Thyroid gland (tissue), 4 donors: ENCODE measurements at regions of chr17 and their contacts with region 1.

Region 1: DNA sequence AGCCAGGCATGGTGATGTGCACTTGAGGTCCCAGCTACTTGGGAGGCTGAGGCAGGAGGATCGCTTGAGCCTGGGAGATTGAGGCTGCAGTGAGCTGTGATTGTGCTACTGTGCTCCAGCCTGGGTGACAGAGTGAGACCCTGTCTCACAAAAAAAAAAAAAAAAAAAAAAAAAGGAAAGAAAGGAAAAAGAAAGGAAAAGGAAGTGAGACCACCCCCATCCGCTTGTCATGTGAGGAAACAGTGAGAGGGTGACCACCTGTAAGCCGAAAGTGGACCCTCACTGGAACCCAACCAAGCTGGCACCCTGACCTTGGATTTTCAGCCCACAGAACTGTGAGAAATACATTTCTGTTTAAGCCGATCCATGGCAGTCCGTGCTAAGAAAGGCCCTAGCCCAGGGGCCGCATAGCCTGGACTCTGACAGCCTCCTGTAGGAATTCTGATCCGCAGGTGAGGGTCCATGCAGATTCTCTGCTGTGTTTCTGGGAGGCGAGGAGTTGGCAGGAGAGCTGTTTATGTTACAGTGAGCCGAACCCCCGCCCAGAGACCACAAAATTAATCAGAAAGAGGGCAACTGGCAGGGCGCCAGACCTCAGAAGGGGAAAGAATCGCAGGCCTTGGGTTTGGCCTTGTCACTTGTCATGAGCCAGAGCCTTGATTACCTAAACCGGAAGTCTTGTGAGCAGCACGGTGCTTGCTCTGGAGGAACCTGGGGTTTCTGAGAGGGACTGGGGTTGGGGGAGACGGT is 945 bp downstream of the SGSH start:
- DNase-seq: peak; percentile 64 to 69
- H3K4me3 ChIP-seq: peak overlapping the region; percentile 93 to 100 (median 93)
- H3K27ac ChIP-seq: peak overlapping the region; percentile 82 to 95 (median 89)
- H3K4me1 ChIP-seq: peaks cover 18 to 21% of the 10 kb centered on the region in 2 donors
- H3K27me3 ChIP-seq: no peaks in the 10 kb centered on the region
- CTCF ChIP-seq: no peak
- POLR2A ChIP-seq: no peak

Region 2: GRCh38 chr17:80147035-80147836 is 72.0 kb before region 1 on chr17 and contains the start of gene EIF4A3:
- intact Hi-C with region 1: loop called (anchors 5 kb)
- DNase-seq: peak; percentile 98 to 99
- H3K4me3 ChIP-seq: peak within 1 kb of the TSS; percentile 79 to 99 (median 91)
- H3K27ac ChIP-seq: peak within 1 kb of the TSS; percentile 57 to 94 (median 94)
- H3K4me1 ChIP-seq: peaks cover 22 to 25% of the 10 kb centered on the region in 2 donors
- H3K27me3 ChIP-seq: no peaks in the 10 kb centered on the region
- CTCF ChIP-seq: peak in 1 of 6 experiments; percentile 23
- POLR2A ChIP-seq: peak; percentile 57 to 97
- total RNA-seq, gene EIF4A3: 42.9 to 79.8 (median 47.4) TPM

Region 3: DNA sequence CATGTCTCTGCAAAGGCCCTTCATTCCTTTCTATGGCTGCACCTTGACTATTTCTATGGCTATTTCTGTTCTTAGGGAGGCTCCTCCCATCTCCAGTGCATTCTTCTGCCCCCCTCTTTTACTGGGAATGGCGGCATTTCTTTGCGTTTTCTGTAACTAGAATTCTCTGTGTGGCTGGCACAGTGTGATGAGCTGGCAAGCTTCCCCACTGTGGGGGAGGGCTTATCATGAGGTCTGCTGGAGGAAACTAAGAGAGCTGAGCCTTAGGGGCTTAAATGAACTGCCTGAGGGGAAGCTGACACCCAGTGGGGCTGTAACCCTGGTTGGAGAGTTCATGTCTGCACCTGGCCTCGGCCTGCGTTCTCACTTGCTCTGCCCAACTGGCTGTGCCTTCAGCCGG is 50.8 kb before region 1 on chr17:
- intact Hi-C with region 1: no loop called
- DNase-seq: no peak
- H3K4me3 ChIP-seq: no peak overlapping the region
- H3K27ac ChIP-seq: no peak overlapping the region
- H3K4me1 ChIP-seq: no peaks in the 10 kb centered on the region
- H3K27me3 ChIP-seq: no peaks in the 10 kb centered on the region
- CTCF ChIP-seq: no peak
- POLR2A ChIP-seq: no peak

Region 4: DNA sequence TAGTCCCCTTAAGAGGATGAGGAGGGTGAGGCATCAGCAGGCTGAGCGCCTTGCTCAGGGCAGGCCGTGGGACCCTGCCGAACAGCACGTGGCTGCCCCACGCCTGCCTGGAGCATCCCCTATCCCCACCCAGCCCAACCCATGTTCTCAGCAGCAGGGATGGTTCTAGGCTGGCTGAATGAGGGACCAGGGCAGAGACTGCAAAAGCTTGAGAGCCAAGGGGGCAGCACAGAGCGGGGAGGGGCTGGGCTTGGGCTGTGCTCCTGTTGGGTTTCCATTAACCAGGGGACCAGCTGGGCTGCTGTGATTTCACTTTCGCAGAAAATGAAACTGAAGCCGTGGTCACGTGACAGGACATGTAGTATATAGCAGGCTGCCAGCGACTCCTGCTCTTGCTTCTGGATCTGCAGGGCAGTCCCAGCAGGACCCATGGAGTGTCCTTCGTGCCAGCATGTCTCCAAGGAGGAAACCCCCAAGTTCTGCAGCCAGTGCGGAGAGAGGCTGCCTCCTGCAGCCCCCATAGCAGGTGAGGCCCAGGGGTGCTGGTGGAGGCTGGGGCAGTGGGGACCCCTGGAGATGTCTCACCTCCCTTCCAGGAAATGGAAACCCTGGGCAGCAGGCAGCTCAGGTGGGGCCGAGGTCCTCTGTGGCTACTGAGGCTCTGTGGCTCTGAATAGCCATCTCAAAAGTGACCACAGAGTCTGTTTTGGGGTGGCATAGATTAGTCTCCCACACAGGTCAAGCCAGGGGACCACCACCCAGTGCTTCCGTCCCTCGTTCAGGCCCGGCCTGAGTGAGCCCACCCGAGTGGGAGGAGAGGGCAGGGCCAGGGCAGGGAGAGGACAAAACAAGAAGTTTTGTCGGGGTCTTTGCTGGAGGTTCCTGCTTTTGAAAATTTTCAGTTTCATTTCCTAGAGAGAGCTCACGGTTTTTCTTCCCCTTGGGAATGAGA is 44.3 kb after region 1 on chr17:
- intact Hi-C with region 1: loop called (anchors 5 kb)
- DNase-seq: peak; percentile 56 to 59
- H3K4me3 ChIP-seq: peak overlapping the region in 1 of 3 donors; percentile 15
- H3K27ac ChIP-seq: peak overlapping the region; percentile 34 to 99 (median 98)
- H3K4me1 ChIP-seq: peaks cover 19 to 39% of the 10 kb centered on the region in 2 donors
- H3K27me3 ChIP-seq: no peaks in the 10 kb centered on the region
- CTCF ChIP-seq: no peak
- POLR2A ChIP-seq: no peak